ENCODE measurements at regions of chr21 and their contacts with region 1.

Region 1: GRCh38 chr21:41032541-41032940 is 135.4 kb upstream of the BACE2 start:
- DNase-seq: no peak
- H3K4me3 ChIP-seq: no peak overlapping the region
- H3K27ac ChIP-seq: no peak overlapping the region
- H3K4me1 ChIP-seq: no peaks in the 10 kb centered on the region
- H3K27me3 ChIP-seq: no peaks in the 10 kb centered on the region; a peak in 1 of 7 replicates
- CTCF ChIP-seq: no peak
- EP300 ChIP-seq: no peak
- POLR2A ChIP-seq: no peak
- RAD21 ChIP-seq: no peak

Region 2: DNA sequence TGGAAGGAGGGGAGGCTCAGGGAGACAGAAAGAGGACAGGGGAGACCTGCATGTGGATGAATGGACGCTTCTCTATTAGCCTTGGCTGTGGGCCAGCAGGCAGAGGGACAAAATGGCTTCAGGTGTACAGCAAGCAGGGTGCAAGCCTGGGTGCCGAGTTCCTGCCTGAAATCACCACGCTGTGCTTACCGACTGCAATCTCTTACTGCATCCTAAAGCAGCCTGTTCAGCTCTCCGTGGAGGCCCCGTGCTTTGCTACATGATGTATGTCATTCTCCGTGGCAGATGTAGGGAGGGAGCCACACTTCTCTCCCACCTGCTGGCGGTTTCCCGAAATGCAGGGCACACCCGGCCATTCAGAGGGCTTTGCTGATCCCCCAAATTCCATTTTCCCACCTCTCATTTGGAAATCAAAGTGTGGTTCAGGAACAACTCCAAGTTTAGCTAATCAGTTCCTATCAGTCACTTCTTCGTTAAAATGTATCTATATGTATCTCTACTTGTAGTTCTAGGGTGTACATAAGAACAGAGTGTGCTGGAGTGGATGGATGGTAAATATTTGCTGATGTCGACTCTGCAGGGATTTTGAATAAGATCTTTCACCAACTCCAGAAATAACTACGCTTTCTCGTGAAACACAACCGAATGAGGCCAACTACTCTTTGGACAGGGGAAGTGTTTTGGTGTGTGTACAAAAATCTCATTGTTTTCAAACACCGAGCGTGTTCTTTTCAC is 13.2 kb after region 1 on chr21:
- CTCF ChIA-PET with region 1: interaction called, 10 read pairs
- POLR2A ChIA-PET with region 1: no interaction called
- DNase-seq: peak; percentile 9 to 84
- H3K4me3 ChIP-seq: no peak overlapping the region
- H3K27ac ChIP-seq: no peak overlapping the region
- H3K4me1 ChIP-seq: peaks cover 0 to 2% (median 0%) of the 10 kb centered on the region in 4 experiments; a peak in 3 of 7 replicates
- H3K27me3 ChIP-seq: no peaks in the 10 kb centered on the region
- CTCF ChIP-seq: peak; percentile 45 to 79 (median 74)
- EP300 ChIP-seq: no peak
- POLR2A ChIP-seq: no peak
- RAD21 ChIP-seq: peak; percentile 67 to 69

Region 3: DNA sequence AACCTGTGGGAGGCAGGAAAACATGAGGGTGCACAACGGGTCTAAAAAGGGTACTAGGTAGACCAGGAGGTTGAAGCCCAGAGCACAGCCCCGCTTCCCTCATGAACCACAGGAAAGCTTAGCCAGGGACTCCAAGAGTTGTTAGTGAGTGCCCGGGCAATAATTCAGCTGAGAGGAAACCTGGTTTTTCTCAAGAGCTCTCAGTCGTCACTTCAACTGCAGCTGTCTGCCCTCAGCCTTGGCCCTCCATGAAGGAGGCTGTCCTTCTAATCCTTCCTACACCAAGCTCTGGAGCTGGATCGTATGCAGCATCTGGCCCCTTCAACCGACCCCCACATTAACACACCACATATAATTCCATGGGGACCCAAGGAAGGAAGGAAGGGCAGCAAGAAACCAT is 58.4 kb after region 1 on chr21:
- CTCF ChIA-PET with region 1: no interaction called
- POLR2A ChIA-PET with region 1: no interaction called
- DNase-seq: no peak
- H3K4me3 ChIP-seq: no peak overlapping the region
- H3K27ac ChIP-seq: no peak overlapping the region
- H3K4me1 ChIP-seq: no peaks in the 10 kb centered on the region; a peak in 1 of 7 replicates
- H3K27me3 ChIP-seq: no peaks in the 10 kb centered on the region; a peak in 1 of 7 replicates
- CTCF ChIP-seq: no peak
- EP300 ChIP-seq: no peak
- POLR2A ChIP-seq: no peak
- RAD21 ChIP-seq: no peak

Region 4: DNA sequence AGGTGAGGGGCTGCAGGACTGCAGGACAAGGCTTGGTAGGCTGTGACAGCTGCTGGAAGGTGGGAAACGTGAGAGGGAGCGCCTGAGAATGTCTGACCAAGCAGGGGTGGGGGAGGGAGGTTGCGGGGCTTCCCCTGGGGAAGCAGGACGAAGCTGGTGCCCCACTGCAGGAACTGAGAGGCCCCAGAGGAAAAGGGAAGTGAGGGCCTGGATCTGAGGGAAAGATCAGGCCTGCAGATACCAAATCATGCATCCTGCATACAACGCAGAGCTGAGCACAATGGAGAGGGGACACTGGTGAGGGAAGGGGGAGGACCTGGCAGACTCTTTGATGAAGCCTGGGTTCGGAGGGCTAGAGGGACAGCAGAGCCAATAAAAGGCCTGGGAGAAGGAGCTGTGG is 69.7 kb after region 1 on chr21:
- CTCF ChIA-PET with region 1: no interaction called
- POLR2A ChIA-PET with region 1: no interaction called
- DNase-seq: no peak
- H3K4me3 ChIP-seq: no peak overlapping the region
- H3K27ac ChIP-seq: no peak overlapping the region
- H3K4me1 ChIP-seq: peaks cover 0 to 1% (median 0%) of the 10 kb centered on the region in 4 experiments; a peak in 1 of 7 replicates
- H3K27me3 ChIP-seq: no peaks in the 10 kb centered on the region
- CTCF ChIP-seq: no peak
- EP300 ChIP-seq: no peak
- POLR2A ChIP-seq: no peak
- RAD21 ChIP-seq: no peak